ENCODE measurements at regions of chr1 and their contacts with region 1.

Region 1: GRCh38 chr1:53878492-53879105 is 11.0 kb downstream of the YIPF1 start:
- DNase-seq: no peak
- ATAC-seq: no peak
- H3K4me3 Mint-ChIP-seq: no peak overlapping the region
- H3K27ac Mint-ChIP-seq: no peak overlapping the region
- H3K4me1 Mint-ChIP-seq: peaks cover 2% of the 10 kb centered on the region
- H3K27me3 Mint-ChIP-seq: no peaks in the 10 kb centered on the region
- CTCF ChIP-seq: no peak

Region 2: GRCh38 chr1:53889304-53890298 is 11.0 kb after region 1 on chr1 and contains the start of gene YIPF1:
- CTCF ChIA-PET with region 1: interaction called, 19 read pairs
- POLR2A ChIA-PET with region 1: no interaction called
- intact Hi-C with region 1: no loop called
- DNase-seq: peak; percentile 89
- ATAC-seq: peak; percentile 92
- H3K4me3 Mint-ChIP-seq: peak within 1 kb of the TSS; percentile 96
- H3K27ac Mint-ChIP-seq: peak within 1 kb of the TSS; percentile 99
- H3K4me1 Mint-ChIP-seq: peaks cover 36% of the 10 kb centered on the region
- H3K27me3 Mint-ChIP-seq: no peaks in the 10 kb centered on the region
- CTCF ChIP-seq: no peak
- total RNA-seq, gene YIPF1: 13.2 to 15.6 TPM

Region 3: GRCh38 chr1:53899206-53899628 is 20.6 kb after region 1 on chr1:
- CTCF ChIA-PET with region 1: interaction called, 11 read pairs
- POLR2A ChIA-PET with region 1: no interaction called
- intact Hi-C with region 1: no loop called
- DNase-seq: no peak
- ATAC-seq: no peak
- H3K4me3 Mint-ChIP-seq: no peak overlapping the region
- H3K27ac Mint-ChIP-seq: no peak overlapping the region
- H3K4me1 Mint-ChIP-seq: peaks cover 5% of the 10 kb centered on the region
- H3K27me3 Mint-ChIP-seq: peaks cover 6% of the 10 kb centered on the region
- CTCF ChIP-seq: no peak

Region 4: DNA sequence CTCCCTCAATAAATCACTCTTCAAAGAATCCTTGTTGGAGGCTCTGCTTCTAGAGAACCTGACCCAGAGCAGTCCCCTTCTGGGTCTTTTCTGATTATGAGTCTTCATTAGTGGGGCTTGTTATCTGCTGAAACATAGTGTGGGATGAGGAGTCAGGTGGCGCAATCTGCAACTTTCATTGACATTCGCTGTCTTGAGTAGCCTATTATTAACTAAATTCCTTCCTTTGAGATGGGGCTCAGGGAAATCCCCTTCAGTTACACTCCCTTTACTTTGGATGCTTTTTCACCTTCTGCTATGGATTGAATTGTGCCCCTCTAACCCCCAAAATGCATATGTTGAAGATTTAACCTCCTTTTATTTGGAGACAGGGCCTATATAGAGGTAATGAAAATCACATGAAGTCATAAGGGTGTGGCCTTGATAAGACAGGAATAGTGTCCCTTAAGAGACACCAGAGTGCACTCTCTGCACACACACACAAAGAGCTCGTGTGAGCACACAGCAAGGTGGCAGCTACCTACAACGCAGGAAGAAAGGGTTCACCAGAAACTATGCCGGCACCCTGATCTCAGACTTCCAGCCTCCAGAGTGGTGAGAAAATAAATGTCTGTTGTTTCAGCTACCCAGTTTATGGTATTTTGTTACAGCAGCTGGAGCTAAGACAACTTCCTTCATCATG is 34.9 kb after region 1 on chr1:
- CTCF ChIA-PET with region 1: interaction called, 12 read pairs
- POLR2A ChIA-PET with region 1: no interaction called
- intact Hi-C with region 1: no loop called
- DNase-seq: no peak
- ATAC-seq: no peak
- H3K4me3 Mint-ChIP-seq: no peak overlapping the region
- H3K27ac Mint-ChIP-seq: no peak overlapping the region
- H3K4me1 Mint-ChIP-seq: peaks cover 18% of the 10 kb centered on the region
- H3K27me3 Mint-ChIP-seq: no peaks in the 10 kb centered on the region
- CTCF ChIP-seq: no peak

Region 5: DNA sequence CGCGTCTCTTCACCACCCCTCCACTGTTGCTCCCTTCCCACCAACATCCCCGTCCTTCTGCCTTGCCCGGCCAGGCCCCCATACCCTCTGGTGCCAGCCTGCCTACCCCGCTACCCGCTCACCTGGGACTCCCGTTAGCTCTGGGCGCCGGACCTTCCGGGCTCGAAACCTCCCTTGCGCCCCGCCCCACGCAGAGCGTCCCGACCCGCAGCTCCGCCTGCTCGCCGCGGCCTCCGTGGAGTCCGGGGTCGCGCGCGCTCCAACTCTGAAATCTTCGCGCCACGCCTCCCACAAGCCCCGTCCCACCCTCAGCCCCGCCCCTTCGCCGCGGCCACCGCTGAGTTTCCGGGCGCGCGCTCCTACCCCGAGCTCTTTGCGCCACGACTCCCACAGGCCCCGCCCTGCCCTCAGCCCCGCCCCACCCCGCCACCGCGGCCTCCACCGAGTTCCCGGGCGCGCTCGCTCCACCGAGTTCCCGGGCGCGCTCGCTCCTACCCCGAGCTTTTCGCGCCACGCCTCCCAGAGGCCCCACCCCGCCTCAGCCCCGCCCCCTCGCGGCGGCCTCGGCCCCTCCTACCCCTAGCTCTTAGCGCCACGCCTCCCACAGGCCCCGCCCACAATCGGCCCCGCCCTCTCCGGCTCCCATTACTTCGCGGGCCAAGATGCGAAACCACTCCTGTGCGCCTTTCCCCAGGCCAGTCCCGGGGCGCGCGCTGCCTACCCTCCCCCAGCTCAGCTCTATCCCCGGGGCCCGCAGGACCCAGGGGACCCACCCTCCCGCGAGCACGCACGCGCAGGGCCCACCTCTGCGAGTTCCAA is 67.0 kb after region 1 on chr1 and contains the start of gene IFT25:
- CTCF ChIA-PET with region 1: interaction called, 78 read pairs
- POLR2A ChIA-PET with region 1: interaction called, 4 read pairs
- intact Hi-C with region 1: no loop called
- DNase-seq: peak; percentile 99
- ATAC-seq: peak; percentile 86
- H3K4me3 Mint-ChIP-seq: peak within 1 kb of the TSS; percentile 93
- H3K27ac Mint-ChIP-seq: peak within 1 kb of the TSS; percentile 88
- H3K4me1 Mint-ChIP-seq: peaks cover 53% of the 10 kb centered on the region
- H3K27me3 Mint-ChIP-seq: no peaks in the 10 kb centered on the region
- CTCF ChIP-seq: no peak
- total RNA-seq, gene IFT25: 60.5 to 63.5 TPM